ENCODE measurements at regions of chr10 and their contacts with region 1.

Region 1: GRCh38 chr10:115129752-115130151 is 36.6 kb downstream of the ATRNL1 start:
- DNase-seq: peak; percentile 38
- ATAC-seq: no peak
- H3K4me3 ChIP-seq: no peak overlapping the region
- H3K4me3 Mint-ChIP-seq: no peak overlapping the region
- H3K27ac ChIP-seq: no peak overlapping the region
- H3K27ac Mint-ChIP-seq: no peak overlapping the region
- H3K4me1 ChIP-seq: no peaks in the 10 kb centered on the region
- H3K4me1 Mint-ChIP-seq: no peaks in the 10 kb centered on the region
- H3K27me3 ChIP-seq: no peaks in the 10 kb centered on the region
- H3K27me3 Mint-ChIP-seq: peaks cover 7% of the 10 kb centered on the region
- CTCF ChIP-seq: peak; percentile 63

Region 2: DNA sequence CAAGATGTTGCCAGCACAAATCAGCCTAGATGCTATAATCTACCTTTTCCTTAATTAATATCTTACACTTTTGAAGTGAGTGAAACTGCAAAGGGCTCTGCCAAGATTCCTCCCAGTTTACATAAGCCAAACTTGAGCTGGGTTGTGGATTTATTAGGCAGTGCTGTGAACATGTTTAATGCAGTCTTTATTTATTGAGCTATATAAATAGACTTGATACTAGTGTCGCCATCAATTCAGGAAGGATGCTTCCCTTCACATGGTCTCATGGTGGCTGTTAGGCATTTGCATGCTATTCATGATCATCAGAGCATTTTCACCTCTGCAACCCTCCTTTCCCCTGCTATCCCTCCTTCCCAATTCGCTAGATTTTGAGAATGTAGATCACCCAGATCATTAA is 1338.1 kb before region 1 on chr10:
- CTCF ChIA-PET with region 1: no interaction called
- POLR2A ChIA-PET with region 1: no interaction called
- intact Hi-C with region 1: loop called (anchors 10 kb)
- DNase-seq: no peak
- ATAC-seq: no peak
- H3K4me3 ChIP-seq: no peak overlapping the region
- H3K4me3 Mint-ChIP-seq: no peak overlapping the region
- H3K27ac ChIP-seq: no peak overlapping the region
- H3K27ac Mint-ChIP-seq: no peak overlapping the region
- H3K4me1 ChIP-seq: no peaks in the 10 kb centered on the region
- H3K4me1 Mint-ChIP-seq: no peaks in the 10 kb centered on the region
- H3K27me3 ChIP-seq: peaks cover 0 to 9% (median 1%) of the 10 kb centered on the region in 4 experiments
- H3K27me3 Mint-ChIP-seq: peaks cover 43% of the 10 kb centered on the region
- CTCF ChIP-seq: no peak

Region 3: DNA sequence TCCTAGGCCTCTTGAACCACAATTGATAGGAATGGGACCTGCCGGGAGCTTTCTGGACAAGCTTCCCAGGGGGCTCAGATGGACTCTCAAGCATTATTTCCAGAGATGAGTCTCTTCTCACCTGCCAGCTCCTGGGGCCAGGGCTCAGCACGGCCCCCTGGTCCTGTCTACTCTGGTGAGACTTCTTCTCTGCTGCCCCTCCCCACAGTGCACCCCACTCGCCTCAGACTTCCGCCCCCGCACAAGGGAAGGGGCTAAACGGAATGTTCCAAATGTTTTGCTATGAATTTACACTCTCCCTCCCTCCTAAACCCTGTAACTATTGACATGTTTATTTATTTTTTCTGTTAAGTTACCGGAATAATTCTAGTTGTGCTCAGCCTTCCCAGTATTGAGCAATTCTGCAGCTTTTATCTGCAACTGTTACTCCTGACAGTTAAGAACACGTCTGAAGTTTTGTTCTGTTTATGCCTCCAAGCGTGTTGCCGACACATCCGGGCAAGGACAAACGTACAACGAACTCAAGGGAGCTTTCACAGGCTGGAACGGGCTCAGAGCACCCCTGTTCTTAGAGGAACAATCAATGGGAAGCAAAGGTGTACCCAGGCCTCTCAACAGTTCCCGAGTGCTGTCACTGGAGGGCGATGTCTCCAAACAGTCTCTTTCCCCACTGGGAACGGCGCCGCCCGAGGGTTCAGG is 253.0 kb before region 1 on chr10:
- CTCF ChIA-PET with region 1: interaction called, 16 read pairs
- POLR2A ChIA-PET with region 1: no interaction called
- intact Hi-C with region 1: loop called (anchors 1 kb)
- DNase-seq: peak; percentile 29
- ATAC-seq: peak; percentile 33
- H3K4me3 ChIP-seq: no peak overlapping the region
- H3K4me3 Mint-ChIP-seq: no peak overlapping the region
- H3K27ac ChIP-seq: no peak overlapping the region
- H3K27ac Mint-ChIP-seq: no peak overlapping the region
- H3K4me1 ChIP-seq: peaks cover 12% of the 10 kb centered on the region in 2 donors
- H3K4me1 Mint-ChIP-seq: peaks cover 8% of the 10 kb centered on the region
- H3K27me3 ChIP-seq: peaks cover 0 to 21% (median 2%) of the 10 kb centered on the region in 4 experiments
- H3K27me3 Mint-ChIP-seq: peaks cover 41% of the 10 kb centered on the region
- CTCF ChIP-seq: peak; percentile 46